Caco-2 (cell line): ENCODE measurements at regions of chr6 and their contacts with region 1.

Region 1: DNA sequence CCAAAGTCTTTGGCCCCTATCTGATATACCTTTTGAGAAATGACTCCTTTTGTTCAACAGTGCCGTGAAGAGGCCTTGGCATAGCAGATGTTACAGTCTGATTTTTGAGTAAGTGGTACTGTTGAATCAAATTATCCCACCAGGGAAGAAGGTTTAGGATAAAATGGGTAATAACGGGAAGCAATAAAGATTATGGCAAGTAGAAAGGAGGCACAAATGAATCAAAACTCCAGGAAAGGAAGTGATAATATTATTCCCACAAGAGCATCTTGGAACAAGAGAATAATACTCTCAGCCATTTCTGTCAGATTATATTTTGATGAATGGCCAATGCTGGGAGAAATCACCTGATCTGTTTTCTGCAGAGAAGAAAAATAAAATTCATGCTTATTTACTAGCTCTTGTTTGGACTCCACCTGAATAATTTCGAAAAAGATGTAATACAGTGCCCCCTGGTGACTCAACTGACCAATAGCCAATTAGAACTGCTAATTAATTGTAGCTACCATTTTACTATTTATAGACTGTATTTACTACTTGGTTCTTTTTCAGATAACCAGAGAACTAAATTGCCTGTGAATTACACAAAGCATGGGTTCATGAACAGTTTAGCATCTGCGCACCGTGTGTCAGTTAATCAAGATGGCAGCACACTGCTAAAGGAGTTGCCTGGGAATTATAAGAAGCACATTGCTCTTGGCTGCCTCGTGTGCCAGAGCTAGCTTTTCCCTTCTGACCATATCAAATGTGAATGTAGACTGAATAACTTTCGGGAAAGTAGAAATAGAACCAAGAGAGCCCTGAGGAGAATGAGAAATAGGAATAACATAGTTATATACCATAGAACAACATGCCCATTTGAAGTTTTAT is 78.5 kb upstream of the TRDN start:
- DNase-seq: peak in 1 of 2 experiments; percentile 38
- H3K4me3 ChIP-seq: no peak overlapping the region
- H3K4me3 Mint-ChIP-seq: no peak overlapping the region
- H3K27ac Mint-ChIP-seq: no peak overlapping the region
- H3K4me1 ChIP-seq: no peaks in the 10 kb centered on the region
- H3K4me1 Mint-ChIP-seq: no peaks in the 10 kb centered on the region
- H3K27me3 ChIP-seq: no peaks in the 10 kb centered on the region; the same call in 1 of the 2 replicates
- H3K27me3 Mint-ChIP-seq: peaks cover 7% of the 10 kb centered on the region
- CTCF ChIP-seq: peak; percentile 37 to 39

Region 2: GRCh38 chr6:123393328-123393727 is 321.9 kb before region 1 on chr6:
- CTCF ChIA-PET with region 1: no interaction called
- POLR2A ChIA-PET with region 1: no interaction called
- intact Hi-C with region 1: loop called (anchors 1 kb)
- DNase-seq: peak in 1 of 2 experiments; percentile 2
- H3K4me3 ChIP-seq: no peak overlapping the region
- H3K4me3 Mint-ChIP-seq: no peak overlapping the region
- H3K27ac Mint-ChIP-seq: no peak overlapping the region
- H3K4me1 ChIP-seq: no peaks in the 10 kb centered on the region
- H3K4me1 Mint-ChIP-seq: no peaks in the 10 kb centered on the region
- H3K27me3 ChIP-seq: no peaks in the 10 kb centered on the region
- H3K27me3 Mint-ChIP-seq: no peaks in the 10 kb centered on the region
- CTCF ChIP-seq: peak; percentile 8 to 18

Region 3: GRCh38 chr6:123415844-123416468 is 299.3 kb before region 1 on chr6:
- CTCF ChIA-PET with region 1: interaction called, 7 read pairs
- POLR2A ChIA-PET with region 1: no interaction called
- intact Hi-C with region 1: loop called (anchors 1 kb)
- DNase-seq: peak; percentile 48
- H3K4me3 ChIP-seq: no peak overlapping the region
- H3K4me3 Mint-ChIP-seq: no peak overlapping the region
- H3K27ac Mint-ChIP-seq: no peak overlapping the region
- H3K4me1 ChIP-seq: no peaks in the 10 kb centered on the region
- H3K4me1 Mint-ChIP-seq: no peaks in the 10 kb centered on the region
- H3K27me3 ChIP-seq: no peaks in the 10 kb centered on the region
- H3K27me3 Mint-ChIP-seq: no peaks in the 10 kb centered on the region
- CTCF ChIP-seq: peak; percentile 27 to 58